Activated naive CD4-positive, alpha-beta T cell treated with anti-CD3 and anti-CD28 coated beads for 36 hours (primary cell): ENCODE measurements at regions of chr12 and their contacts with region 1.

Region 1: DNA sequence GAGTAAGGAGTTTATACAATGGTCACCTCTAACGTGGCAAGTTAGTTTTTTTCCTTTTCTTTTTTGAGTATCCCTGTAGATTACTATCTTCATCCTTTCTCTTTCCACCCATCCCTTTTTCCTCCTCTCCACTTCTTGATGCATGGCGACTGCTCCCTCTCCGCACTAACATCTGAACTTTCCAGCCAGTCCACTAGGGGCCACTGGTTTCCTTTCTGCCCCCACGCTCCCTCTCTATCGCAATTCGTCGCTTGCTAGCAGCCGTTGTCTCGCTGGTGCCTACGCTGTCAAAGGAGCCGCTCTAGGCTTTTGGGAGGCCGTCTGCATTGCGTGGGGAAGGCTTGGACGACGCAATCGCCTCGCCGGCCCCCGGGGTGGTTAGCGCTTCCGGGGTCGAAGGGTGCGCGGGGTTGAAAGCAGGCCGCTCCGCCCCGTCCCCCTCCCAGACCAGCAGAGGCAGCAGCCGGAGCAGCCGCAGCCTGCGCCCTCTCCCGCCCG is at the start of gene PCBP2:
- DNase-seq: peak; percentile 99
- H3K4me3 Mint-ChIP-seq: peak within 1 kb of the TSS; percentile 99
- H3K27ac Mint-ChIP-seq: peak within 1 kb of the TSS; percentile 99
- H3K4me1 Mint-ChIP-seq: peaks cover 36% of the 10 kb centered on the region
- H3K27me3 Mint-ChIP-seq: no peaks in the 10 kb centered on the region
- total RNA-seq, gene PCBP2: 1,085 to 1,132 TPM

Region 2: GRCh38 chr12:53031617-53032016 is 420.1 kb before region 1 on chr12:
- CTCF ChIA-PET with region 1: no interaction called
- intact Hi-C with region 1: loop called (anchors 10 kb)
- DNase-seq: no peak
- H3K4me3 Mint-ChIP-seq: no peak overlapping the region
- H3K27ac Mint-ChIP-seq: no peak overlapping the region
- H3K4me1 Mint-ChIP-seq: peaks cover 3% of the 10 kb centered on the region
- H3K27me3 Mint-ChIP-seq: no peaks in the 10 kb centered on the region

Region 3: GRCh38 chr12:53379389-53380103 is 72.2 kb before region 1 on chr12:
- CTCF ChIA-PET with region 1: no interaction called
- intact Hi-C with region 1: loop called (anchors 1 kb)
- DNase-seq: peak; percentile 99
- H3K4me3 Mint-ChIP-seq: no peak overlapping the region
- H3K27ac Mint-ChIP-seq: no peak overlapping the region
- H3K4me1 Mint-ChIP-seq: peaks cover 48% of the 10 kb centered on the region
- H3K27me3 Mint-ChIP-seq: no peaks in the 10 kb centered on the region

Region 4: DNA sequence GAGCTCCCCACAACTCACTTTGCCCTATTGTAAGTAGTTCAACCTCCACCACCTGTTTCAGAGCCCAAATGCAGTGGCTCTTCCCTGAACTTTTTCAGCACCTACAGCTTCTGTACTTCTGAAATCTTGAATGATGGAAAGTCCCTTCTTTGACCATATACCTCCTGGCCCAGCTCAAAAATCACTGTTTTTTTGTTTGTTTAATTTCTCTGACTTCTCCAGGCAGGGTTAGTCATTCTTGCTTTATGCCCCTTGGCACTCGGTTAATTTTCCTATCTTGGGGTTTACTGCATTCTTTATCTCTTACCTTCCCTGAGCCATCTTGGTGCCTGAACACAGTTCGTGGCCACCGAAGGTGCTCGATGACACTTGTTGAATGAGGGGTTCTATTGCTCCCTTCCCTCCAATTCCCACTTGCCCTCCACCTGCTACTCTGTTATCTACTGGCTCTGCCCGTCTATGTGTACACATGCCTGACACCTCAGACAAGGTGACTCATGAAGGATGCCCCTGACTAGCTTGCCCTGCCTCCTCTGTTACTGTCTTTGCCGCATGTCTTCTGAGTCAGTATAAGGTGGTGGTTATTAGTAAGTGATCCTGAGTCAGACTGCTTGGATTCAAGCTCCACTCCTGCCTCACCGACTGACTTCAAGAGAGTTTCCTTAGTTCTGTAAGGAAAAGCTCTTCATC is 23.7 kb before region 1 on chr12:
- CTCF ChIA-PET with region 1: no interaction called
- intact Hi-C with region 1: loop called (anchors 1 kb)
- DNase-seq: peak; percentile 63
- H3K4me3 Mint-ChIP-seq: no peak overlapping the region
- H3K27ac Mint-ChIP-seq: no peak overlapping the region
- H3K4me1 Mint-ChIP-seq: peaks cover 11% of the 10 kb centered on the region
- H3K27me3 Mint-ChIP-seq: no peaks in the 10 kb centered on the region

Region 5: GRCh38 chr12:53476769-53477209 is 25.1 kb after region 1 on chr12:
- CTCF ChIA-PET with region 1: interaction called, 25 read pairs
- intact Hi-C with region 1: no loop called
- DNase-seq: no peak
- H3K4me3 Mint-ChIP-seq: no peak overlapping the region
- H3K27ac Mint-ChIP-seq: peak overlapping the region; percentile 27
- H3K4me1 Mint-ChIP-seq: peaks cover 51% of the 10 kb centered on the region
- H3K27me3 Mint-ChIP-seq: no peaks in the 10 kb centered on the region